ENCODE measurements at regions of chr9 and their contacts with region 1.

Region 1: GRCh38 chr9:4640027-4640426 is 22.1 kb upstream of the PLPP6 start:
- DNase-seq: no peak
- ATAC-seq: no peak
- H3K4me3 ChIP-seq: no peak overlapping the region
- H3K27ac ChIP-seq: no peak overlapping the region
- H3K4me1 ChIP-seq: no peaks in the 10 kb centered on the region
- H3K27me3 ChIP-seq: no peaks in the 10 kb centered on the region

Region 2: GRCh38 chr9:4315582-4316215 is 324.3 kb before region 1 on chr9:
- intact Hi-C with region 1: loop called in 1 of 2 experiments (anchors 10 kb)
- DNase-seq: peak; percentile 78 to 94
- ATAC-seq: peak; percentile 90
- H3K4me3 ChIP-seq: no peak overlapping the region
- H3K27ac ChIP-seq: no peak overlapping the region
- H3K4me1 ChIP-seq: no peaks in the 10 kb centered on the region
- H3K27me3 ChIP-seq: no peaks in the 10 kb centered on the region

Region 3: GRCh38 chr9:4382722-4383317 is 257.2 kb before region 1 on chr9:
- intact Hi-C with region 1: loop called in 1 of 2 experiments (anchors 5 kb)
- DNase-seq: no peak
- ATAC-seq: no peak
- H3K4me3 ChIP-seq: no peak overlapping the region
- H3K27ac ChIP-seq: no peak overlapping the region
- H3K4me1 ChIP-seq: no peaks in the 10 kb centered on the region
- H3K27me3 ChIP-seq: no peaks in the 10 kb centered on the region

Region 4: GRCh38 chr9:4397917-4398316 is 242.1 kb before region 1 on chr9:
- intact Hi-C with region 1: loop called in 1 of 2 experiments (anchors 5 kb)
- DNase-seq: no peak
- ATAC-seq: no peak
- H3K4me3 ChIP-seq: no peak overlapping the region
- H3K27ac ChIP-seq: no peak overlapping the region
- H3K4me1 ChIP-seq: no peaks in the 10 kb centered on the region
- H3K27me3 ChIP-seq: no peaks in the 10 kb centered on the region